ENCODE measurements at regions of chr1 and their contacts with region 1.

Region 1: DNA sequence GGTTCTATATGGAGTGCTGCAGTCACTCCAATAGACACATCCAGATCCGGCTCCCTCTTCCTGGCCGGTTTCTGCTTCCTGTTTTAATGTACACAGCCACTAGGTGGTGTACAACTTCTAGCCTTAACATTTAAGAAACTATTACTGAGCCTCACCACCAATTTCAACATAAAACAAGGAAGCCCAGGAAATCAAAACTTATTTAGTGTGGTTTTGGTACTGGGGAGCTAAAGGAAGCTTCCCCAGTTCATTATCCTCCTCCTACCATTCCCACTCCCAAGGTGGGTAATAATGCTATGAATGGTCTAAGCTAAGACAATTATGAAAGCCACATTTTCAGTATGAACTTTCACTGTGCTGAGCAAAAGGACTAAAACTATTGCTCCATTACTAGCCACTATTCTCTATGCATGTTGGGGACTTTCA is 25.5 kb upstream of the MTMR11 start:
- DNase-seq: peak in 1 of 2 donors; percentile 63
- H3K4me3 ChIP-seq: no peak overlapping the region
- H3K27ac ChIP-seq: peak overlapping the region; percentile 31 to 59
- H3K4me1 ChIP-seq: peaks cover 0 to 21% (median 17%) of the 10 kb centered on the region in 4 donors
- H3K27me3 ChIP-seq: no peaks in the 10 kb centered on the region
- CTCF ChIP-seq: peak; percentile 74 to 84

Region 2: DNA sequence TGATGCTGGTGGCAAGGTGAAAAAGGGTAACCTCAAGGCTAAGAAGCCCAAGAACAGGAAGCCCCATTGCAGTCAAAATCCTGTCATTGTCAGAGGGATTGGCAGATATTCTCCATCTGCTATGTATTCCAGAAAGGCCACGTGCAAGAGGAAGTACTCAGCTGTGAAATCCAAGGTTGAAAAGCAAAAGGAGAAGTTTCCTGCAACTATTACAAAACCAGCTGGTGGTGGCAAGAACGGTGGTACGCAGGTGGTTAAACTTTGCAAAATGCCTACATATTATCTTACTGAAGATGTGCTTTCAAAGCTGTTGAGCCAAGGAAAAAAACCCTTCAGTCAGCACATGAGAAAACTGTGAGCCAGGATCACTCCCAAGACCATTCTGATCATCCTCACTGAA is 91.8 kb after region 1 on chr1:
- intact Hi-C with region 1: loop called (anchors 5 kb)
- DNase-seq: no peak
- H3K4me3 ChIP-seq: no peak overlapping the region
- H3K27ac ChIP-seq: no peak overlapping the region
- H3K4me1 ChIP-seq: peaks cover 0 to 5% (median 0%) of the 10 kb centered on the region in 4 donors
- H3K27me3 ChIP-seq: no peaks in the 10 kb centered on the region
- CTCF ChIP-seq: no peak

Region 3: DNA sequence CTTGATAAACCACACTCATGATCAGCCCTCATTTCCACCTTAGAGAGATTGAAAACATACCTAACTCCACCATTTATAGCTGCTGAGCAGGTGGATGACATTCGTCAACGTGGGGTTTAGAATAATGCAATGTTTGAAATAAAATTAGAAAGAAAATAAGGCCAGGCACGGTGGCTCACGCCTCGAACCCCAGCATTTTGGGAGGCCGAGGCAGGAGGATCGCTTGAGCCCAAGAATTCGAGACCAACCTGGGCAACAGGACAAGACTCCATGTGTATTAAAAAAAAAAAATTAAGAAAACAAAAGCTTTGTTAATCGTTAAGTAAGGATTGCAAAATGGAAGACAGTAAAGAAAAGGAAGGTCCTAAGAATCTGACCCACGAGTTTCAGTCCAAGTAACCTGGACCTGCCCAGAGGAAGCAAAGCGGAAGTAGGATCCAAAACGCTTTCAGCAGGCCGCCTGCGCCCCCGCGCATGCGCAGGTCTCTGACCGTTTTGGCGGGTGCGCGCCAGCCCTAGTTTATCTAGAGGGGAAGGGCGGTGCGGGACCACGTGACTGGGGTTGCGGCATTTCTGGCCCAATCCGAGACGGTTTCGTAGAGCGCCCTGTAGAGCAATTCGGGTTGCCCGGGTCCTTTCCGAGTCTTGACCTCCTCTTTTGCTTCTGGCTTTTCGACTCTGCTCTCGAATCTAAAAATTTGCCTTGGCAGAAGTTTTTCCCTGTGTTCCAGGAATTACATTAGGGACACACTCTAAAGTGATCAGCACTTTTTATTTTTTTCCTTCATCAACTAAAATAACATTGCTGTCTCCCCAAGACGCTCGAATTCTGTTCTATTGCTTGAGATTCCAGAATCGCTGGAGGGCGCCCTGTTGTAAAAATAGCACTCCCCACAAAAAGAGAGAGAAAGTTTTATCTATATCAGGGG is 251.3 kb after region 1 on chr1:
- intact Hi-C with region 1: no loop called
- DNase-seq: peak; percentile 95 to 97
- H3K4me3 ChIP-seq: peak overlapping the region; percentile 50 to 60
- H3K27ac ChIP-seq: peak overlapping the region; percentile 76 to 80
- H3K4me1 ChIP-seq: peaks cover 0 to 11% (median 3%) of the 10 kb centered on the region in 4 donors
- H3K27me3 ChIP-seq: no peaks in the 10 kb centered on the region
- CTCF ChIP-seq: peak in 1 of 2 experiments; percentile 23